ENCODE measurements at regions of chr5 and their contacts with region 1.

Region 1: DNA sequence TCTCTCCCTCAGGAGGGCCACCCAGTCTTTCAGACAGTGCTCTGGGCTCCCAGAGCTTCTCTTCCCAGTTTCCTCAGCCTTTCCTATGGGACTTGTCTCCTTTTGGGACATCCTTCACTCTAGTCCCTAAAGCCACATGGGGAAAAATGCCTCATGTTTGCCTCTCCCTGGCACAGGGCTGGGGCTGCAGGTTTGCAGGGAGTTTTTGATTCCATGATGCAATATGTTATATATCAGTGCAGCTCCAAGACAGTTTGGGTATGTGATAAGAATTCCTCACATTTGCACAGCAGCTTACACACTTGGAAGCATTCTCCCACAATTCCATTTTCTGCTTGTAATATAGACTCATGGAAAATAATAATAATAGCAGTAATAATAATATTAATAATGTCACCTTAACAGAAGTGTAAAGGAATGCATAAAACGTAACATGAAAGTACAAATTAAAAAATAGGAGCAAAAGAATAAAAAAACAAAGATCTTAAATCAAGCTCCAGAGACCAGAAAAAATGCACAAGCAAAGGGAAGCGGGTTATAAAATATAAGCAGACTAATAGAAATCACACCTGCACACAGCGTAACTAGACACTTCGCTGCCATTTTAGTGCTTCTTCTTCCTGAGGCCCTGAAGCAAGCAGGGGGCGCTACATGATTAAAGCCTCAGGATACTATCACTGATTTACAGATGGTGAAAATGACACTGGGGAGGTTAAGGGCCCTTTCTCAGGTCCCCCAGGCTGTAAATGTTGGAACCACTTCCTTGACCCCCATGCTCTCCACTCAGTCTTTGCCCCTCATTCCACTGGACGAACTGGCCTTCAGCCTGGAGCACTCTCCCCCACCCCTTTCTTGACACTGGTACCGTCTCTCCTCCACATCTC is 70.0 kb upstream of the IL17B start:
- DNase-seq: no peak
- H3K4me3 ChIP-seq: no peak overlapping the region
- H3K27ac ChIP-seq: no peak overlapping the region
- H3K4me1 ChIP-seq: peaks cover 0 to 19% (median 8%) of the 10 kb centered on the region in 4 experiments; a peak in 6 of 7 replicates
- H3K27me3 ChIP-seq: no peaks in the 10 kb centered on the region
- CTCF ChIP-seq: peak; percentile 17 to 67 (median 45); a peak in 3 of 4 replicates
- EP300 ChIP-seq: no peak
- POLR2A ChIP-seq: no peak
- RAD21 ChIP-seq: peak; percentile 62 to 69

Region 2: GRCh38 chr5:149257965-149258705 is 190.9 kb before region 1 on chr5:
- CTCF ChIA-PET with region 1: no interaction called
- POLR2A ChIA-PET with region 1: no interaction called
- DNase-seq: no peak
- H3K4me3 ChIP-seq: no peak overlapping the region
- H3K27ac ChIP-seq: no peak overlapping the region
- H3K4me1 ChIP-seq: no peaks in the 10 kb centered on the region; a peak in 1 of 7 replicates
- H3K27me3 ChIP-seq: 0 out of 7 replicates have a peak, but pooled peaks cover 0 to 2% (median 0%) of the 10 kb centered on the region in 4 experiments
- CTCF ChIP-seq: no peak
- EP300 ChIP-seq: no peak
- POLR2A ChIP-seq: no peak
- RAD21 ChIP-seq: no peak

Region 3: GRCh38 chr5:149561848-149562247 is 112.8 kb after region 1 on chr5:
- CTCF ChIA-PET with region 1: interaction called, 174 read pairs
- POLR2A ChIA-PET with region 1: interaction called, 4 read pairs
- DNase-seq: no peak
- H3K4me3 ChIP-seq: no peak overlapping the region
- H3K27ac ChIP-seq: peak overlapping the region; percentile 51; the same call in 1 of the 2 replicates
- H3K4me1 ChIP-seq: peaks cover 5 to 12% (median 7%) of the 10 kb centered on the region in 4 experiments; a peak in 6 of 7 replicates
- H3K27me3 ChIP-seq: no peaks in the 10 kb centered on the region
- CTCF ChIP-seq: no peak
- EP300 ChIP-seq: no peak
- POLR2A ChIP-seq: no peak
- RAD21 ChIP-seq: no peak